ENCODE measurements at regions of chr21 and their contacts with region 1.

Region 1: DNA sequence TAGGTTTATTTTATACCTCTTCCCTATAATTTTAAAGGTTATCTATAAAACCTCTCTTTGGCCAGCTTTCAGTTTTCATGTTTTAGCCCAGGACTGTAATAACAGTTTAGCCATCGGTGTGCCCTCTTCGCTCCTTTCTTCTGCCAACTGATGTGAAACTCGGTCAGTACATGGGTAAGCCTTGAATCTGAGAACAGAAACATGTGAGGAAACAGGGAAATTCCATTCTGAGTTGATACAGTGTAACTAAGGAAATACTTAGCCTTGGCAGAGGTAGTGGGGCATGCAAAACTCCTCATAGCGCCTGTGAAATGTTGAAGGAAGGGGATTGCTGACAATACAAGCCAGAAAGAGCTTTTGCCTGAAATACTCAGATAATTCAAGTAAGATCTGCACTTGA is 465.2 kb downstream of the NCAM2 start:
- DNase-seq: no peak
- H3K4me3 ChIP-seq: no peak overlapping the region
- H3K27ac ChIP-seq: no peak overlapping the region
- H3K4me1 ChIP-seq: no peaks in the 10 kb centered on the region
- CTCF ChIP-seq: no peak

Region 2: GRCh38 chr21:22083899-22084298 is 620.4 kb after region 1 on chr21:
- CTCF ChIA-PET with region 1: no interaction called
- POLR2A ChIA-PET with region 1: no interaction called
- intact Hi-C with region 1: loop called (anchors 5 kb)
- DNase-seq: no peak
- H3K4me3 ChIP-seq: no peak overlapping the region
- H3K27ac ChIP-seq: no peak overlapping the region
- H3K4me1 ChIP-seq: no peaks in the 10 kb centered on the region
- CTCF ChIP-seq: no peak

Measured in OCI-LY7 (cell line).